Activated CD8-positive, alpha-beta memory T cell treated with anti-CD3 and anti-CD28 coated beads, Interleukin-2, amount 10 ng/mL, durations not matched to agents 7 days and 5 days (primary cell): ENCODE measurements at regions of chr3 and their contacts with region 1.

Region 1: GRCh38 chr3:56758539-56758981 is 43.2 kb downstream of the ARHGEF3 start:
- DNase-seq: peak; percentile 62
- ATAC-seq: peak; percentile 79
- H3K4me3 Mint-ChIP-seq: peak overlapping the region; percentile 18
- H3K27ac Mint-ChIP-seq: peak overlapping the region; percentile 76
- H3K4me1 Mint-ChIP-seq: peaks cover 76% of the 10 kb centered on the region
- H3K27me3 Mint-ChIP-seq: no peaks in the 10 kb centered on the region

Region 2: GRCh38 chr3:56725175-56725574 is 33.4 kb before region 1 on chr3:
- CTCF ChIA-PET with region 1: interaction called, 10 read pairs
- DNase-seq: peak; percentile 91
- ATAC-seq: peak; percentile 89
- H3K4me3 Mint-ChIP-seq: peak overlapping the region; percentile 62
- H3K27ac Mint-ChIP-seq: peak overlapping the region; percentile 95
- H3K4me1 Mint-ChIP-seq: peaks cover 58% of the 10 kb centered on the region
- H3K27me3 Mint-ChIP-seq: no peaks in the 10 kb centered on the region